Prostate gland (tissue), 2 donors: ENCODE measurements at regions of chr1 and their contacts with region 1.

Region 1: DNA sequence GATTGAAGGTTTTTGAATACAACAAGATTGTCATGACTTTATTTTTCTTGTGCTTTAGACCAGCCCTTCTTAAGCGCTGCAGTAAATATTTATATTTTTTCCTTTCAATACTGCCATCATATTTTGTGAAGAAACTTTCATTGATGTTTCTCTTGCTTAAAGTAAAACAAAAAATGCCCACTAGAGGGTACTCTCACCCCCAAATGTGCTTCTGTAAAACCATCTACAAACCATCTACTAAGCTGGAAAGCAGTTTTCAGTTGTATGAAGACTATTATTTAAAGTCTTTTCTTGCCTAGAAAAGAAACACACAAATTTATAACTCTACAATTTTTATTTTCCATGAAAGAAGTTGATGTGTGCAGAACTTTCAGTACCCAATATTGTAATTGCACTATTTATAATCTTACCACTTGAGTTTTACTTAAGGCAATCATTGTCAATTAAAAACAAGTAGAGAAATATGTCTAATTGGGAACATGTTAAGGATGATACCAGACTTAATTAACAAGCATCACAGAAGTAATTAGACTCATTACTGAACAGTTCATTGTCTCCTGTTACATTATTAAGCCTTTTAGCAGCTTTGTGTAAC is 10.7 kb downstream of the LEPR start:
- DNase-seq: no peak
- H3K4me3 ChIP-seq: no peak overlapping the region
- H3K27ac ChIP-seq: no peak overlapping the region
- H3K4me1 ChIP-seq: no peaks in the 10 kb centered on the region
- H3K27me3 ChIP-seq: no peaks in the 10 kb centered on the region
- CTCF ChIP-seq: peak; percentile 11 to 64 (median 60)
- POLR2A ChIP-seq: no peak

Region 2: GRCh38 chr1:65528147-65528546 is 96.9 kb after region 1 on chr1:
- intact Hi-C with region 1: no loop called
- DNase-seq: no peak
- H3K4me3 ChIP-seq: no peak overlapping the region
- H3K27ac ChIP-seq: no peak overlapping the region
- H3K4me1 ChIP-seq: no peaks in the 10 kb centered on the region
- H3K27me3 ChIP-seq: no peaks in the 10 kb centered on the region
- CTCF ChIP-seq: no peak
- POLR2A ChIP-seq: no peak

Region 3: GRCh38 chr1:65687428-65688214 is 256.4 kb after region 1 on chr1:
- intact Hi-C with region 1: loop called (anchors 5 kb)
- DNase-seq: peak; percentile 77
- H3K4me3 ChIP-seq: no peak overlapping the region
- H3K27ac ChIP-seq: no peak overlapping the region
- H3K4me1 ChIP-seq: no peaks in the 10 kb centered on the region
- H3K27me3 ChIP-seq: no peaks in the 10 kb centered on the region
- CTCF ChIP-seq: peak; percentile 78 to 97 (median 94)
- POLR2A ChIP-seq: no peak